ENCODE measurements at regions of chr2 and their contacts with region 1.

Region 1: GRCh38 chr2:33475224-33476130 is 972 bp upstream of the RASGRP3 start:
- DNase-seq: peak; percentile 75
- H3K4me3 Mint-ChIP-seq: peak overlapping the region; percentile 92
- H3K27ac Mint-ChIP-seq: peak overlapping the region; percentile 99
- H3K4me1 Mint-ChIP-seq: peaks cover 41% of the 10 kb centered on the region
- H3K27me3 Mint-ChIP-seq: peaks cover 7% of the 10 kb centered on the region

Region 2: DNA sequence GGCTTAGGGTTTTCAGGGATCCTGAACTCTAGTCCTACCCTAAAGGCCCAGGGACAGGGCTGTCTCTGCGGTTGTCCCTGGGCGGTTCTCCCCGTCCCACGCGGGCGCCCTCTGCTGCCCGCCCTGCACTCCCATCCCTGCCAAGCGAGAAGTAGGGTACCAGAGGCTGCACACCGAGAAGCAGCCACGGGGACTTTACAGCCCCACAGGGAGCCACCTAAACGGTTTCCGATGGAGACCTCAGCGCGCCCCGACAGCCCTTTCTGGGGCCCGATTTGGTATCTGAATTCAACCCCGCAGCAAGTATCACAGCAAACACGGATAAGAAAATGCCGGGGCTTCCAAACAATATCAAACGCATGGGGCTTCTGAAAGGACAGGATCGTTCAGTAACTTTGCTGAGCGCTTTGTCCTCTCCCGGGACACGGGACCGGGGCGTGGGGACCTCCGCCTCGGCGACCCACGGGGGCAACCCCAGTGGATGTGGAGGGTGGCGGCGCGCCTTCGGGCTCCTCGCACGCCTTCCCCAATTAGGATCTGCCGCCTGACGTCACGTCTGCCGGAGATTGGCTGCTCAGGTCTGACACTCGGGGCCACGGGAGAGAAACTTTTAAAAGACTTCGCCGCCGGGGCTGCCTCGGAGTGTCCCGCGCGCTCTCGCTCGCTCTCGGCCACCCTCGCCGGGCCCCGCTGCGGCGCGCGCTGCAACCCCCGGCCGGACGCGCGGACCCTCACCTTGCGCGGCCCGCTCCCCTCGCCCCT is 529.0 kb before region 1 on chr2 and contains the start of gene LTBP1:
- intact Hi-C with region 1: loop called (anchors 1 kb)
- DNase-seq: peak; percentile 68
- H3K4me3 Mint-ChIP-seq: peak within 1 kb of the TSS; percentile 84
- H3K27ac Mint-ChIP-seq: no peak within 1 kb of the TSS
- H3K4me1 Mint-ChIP-seq: peaks cover under 1% of the 10 kb centered on the region
- H3K27me3 Mint-ChIP-seq: peaks cover 30% of the 10 kb centered on the region
- total RNA-seq, gene LTBP1: 0.12 and 0.26 TPM in 2 replicates

Region 3: GRCh38 chr2:33395655-33396249 is 79.7 kb before region 1 on chr2:
- intact Hi-C with region 1: no loop called
- DNase-seq: peak; percentile 16
- H3K4me3 Mint-ChIP-seq: no peak overlapping the region
- H3K27ac Mint-ChIP-seq: no peak overlapping the region
- H3K4me1 Mint-ChIP-seq: no peaks in the 10 kb centered on the region
- H3K27me3 Mint-ChIP-seq: peaks cover 5% of the 10 kb centered on the region

Region 4: DNA sequence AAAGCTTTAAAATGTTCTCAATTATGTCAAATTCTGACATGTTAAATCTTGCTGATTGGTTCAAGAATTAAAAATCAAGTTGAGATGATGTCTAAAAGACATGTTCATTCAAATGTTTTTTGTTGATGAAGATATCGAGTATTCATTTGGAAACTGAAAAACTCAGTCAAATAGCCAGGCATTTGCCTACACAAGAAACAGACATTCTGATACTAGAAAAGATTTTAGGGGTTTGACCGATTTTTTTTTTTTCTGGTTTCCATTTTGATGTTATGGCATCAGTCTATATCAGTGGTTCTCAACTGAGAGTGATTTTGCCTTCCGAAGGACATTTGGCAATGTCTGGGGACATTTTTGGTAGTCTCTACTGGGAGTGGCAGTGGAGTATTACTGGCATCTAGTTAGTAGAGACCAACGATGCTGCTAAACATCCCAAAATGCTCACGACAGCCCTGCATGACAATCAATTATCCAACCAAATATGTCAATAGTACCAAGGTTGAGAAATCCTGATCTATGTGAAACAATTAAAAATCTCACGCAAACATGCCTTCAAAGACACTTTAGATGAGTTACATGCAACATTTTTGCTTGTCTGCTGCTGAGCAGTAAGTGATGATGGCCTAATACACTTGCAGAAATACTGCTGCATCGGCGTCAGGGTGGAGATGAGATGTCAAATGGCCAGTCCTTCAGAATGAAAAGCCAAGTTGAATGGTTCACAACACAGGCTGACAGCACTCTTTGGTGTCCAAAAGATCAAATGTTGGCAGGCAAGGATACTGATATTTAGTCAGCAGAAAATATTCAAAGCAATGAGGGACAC is 13.5 kb after region 1 on chr2:
- intact Hi-C with region 1: loop called (anchors 1 kb)
- DNase-seq: no peak
- H3K4me3 Mint-ChIP-seq: peak overlapping the region; percentile 38
- H3K27ac Mint-ChIP-seq: peak overlapping the region; percentile 75
- H3K4me1 Mint-ChIP-seq: peaks cover 32% of the 10 kb centered on the region
- H3K27me3 Mint-ChIP-seq: peaks cover 2% of the 10 kb centered on the region

Region 5: GRCh38 chr2:33497221-33497650 is 21.8 kb after region 1 on chr2:
- intact Hi-C with region 1: loop called (anchors 1 kb)
- DNase-seq: no peak
- H3K4me3 Mint-ChIP-seq: peak overlapping the region; percentile 23
- H3K27ac Mint-ChIP-seq: peak overlapping the region; percentile 49
- H3K4me1 Mint-ChIP-seq: peaks cover 50% of the 10 kb centered on the region
- H3K27me3 Mint-ChIP-seq: peaks cover 2% of the 10 kb centered on the region

Region 6: DNA sequence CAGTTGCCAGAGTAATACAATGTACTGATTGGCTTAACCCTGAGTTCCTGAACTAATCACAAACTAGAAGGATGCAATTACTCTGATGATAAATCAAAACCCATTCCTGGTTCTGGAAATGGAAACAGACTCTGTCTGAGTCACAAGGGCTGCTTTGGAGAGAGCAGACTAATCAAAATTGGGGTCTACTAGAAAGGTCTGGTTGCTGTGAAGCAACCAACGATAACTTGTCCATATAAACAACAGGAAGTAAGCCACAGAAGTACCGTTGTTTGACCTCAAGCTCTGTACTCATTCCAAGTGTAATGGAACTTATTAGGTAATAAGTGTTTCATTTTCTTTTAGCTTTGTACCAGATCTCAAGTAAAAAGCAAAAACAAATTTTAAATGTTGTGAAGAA is 50.7 kb after region 1 on chr2:
- intact Hi-C with region 1: loop called (anchors 1 kb)
- DNase-seq: no peak
- H3K4me3 Mint-ChIP-seq: no peak overlapping the region
- H3K27ac Mint-ChIP-seq: peak overlapping the region; percentile 61
- H3K4me1 Mint-ChIP-seq: peaks cover 30% of the 10 kb centered on the region
- H3K27me3 Mint-ChIP-seq: no peaks in the 10 kb centered on the region

Region 7: DNA sequence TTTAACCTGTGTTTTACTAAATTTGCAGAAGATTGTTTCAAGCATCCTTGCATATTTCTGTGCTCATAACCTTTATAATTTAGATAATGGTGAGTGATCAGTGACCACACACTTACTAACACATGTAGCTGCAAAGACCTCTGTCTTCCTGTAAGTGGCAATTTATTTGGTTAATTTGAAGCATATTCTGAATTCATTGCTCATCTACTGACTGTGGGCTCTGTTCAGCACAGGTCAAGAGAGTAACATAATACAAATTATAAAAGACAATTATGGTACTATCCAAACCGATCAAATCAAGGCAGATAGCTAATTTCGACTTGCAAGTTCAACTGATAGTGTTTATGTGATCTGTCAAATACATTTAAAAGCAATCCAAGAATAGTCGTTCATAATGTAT is 347.5 kb after region 1 on chr2:
- intact Hi-C with region 1: no loop called
- DNase-seq: no peak
- H3K4me3 Mint-ChIP-seq: no peak overlapping the region
- H3K27ac Mint-ChIP-seq: no peak overlapping the region
- H3K4me1 Mint-ChIP-seq: no peaks in the 10 kb centered on the region
- H3K27me3 Mint-ChIP-seq: no peaks in the 10 kb centered on the region

Region 8: GRCh38 chr2:34179511-34179910 is 704.0 kb after region 1 on chr2:
- intact Hi-C with region 1: no loop called
- DNase-seq: no peak
- H3K4me3 Mint-ChIP-seq: no peak overlapping the region
- H3K27ac Mint-ChIP-seq: no peak overlapping the region
- H3K4me1 Mint-ChIP-seq: no peaks in the 10 kb centered on the region
- H3K27me3 Mint-ChIP-seq: no peaks in the 10 kb centered on the region